Activated B cell treated with CpG ODN at 0.5 μM for 24 hours (primary cell): ENCODE measurements at regions of chr4 and their contacts with region 1.

Region 1: GRCh38 chr4:128060699-128061565 is at the start of gene LARP1B:
- DNase-seq: peak; percentile 95
- ATAC-seq: peak; percentile 89
- H3K4me3 Mint-ChIP-seq: peak within 1 kb of the TSS; percentile 84
- H3K27ac Mint-ChIP-seq: peak within 1 kb of the TSS; percentile 90
- H3K4me1 Mint-ChIP-seq: peaks cover 10% of the 10 kb centered on the region
- H3K27me3 Mint-ChIP-seq: no peaks in the 10 kb centered on the region
- CTCF ChIP-seq: no peak
- total RNA-seq, gene LARP1B: 10.7 and 11.5 TPM in 2 replicates

Region 2: DNA sequence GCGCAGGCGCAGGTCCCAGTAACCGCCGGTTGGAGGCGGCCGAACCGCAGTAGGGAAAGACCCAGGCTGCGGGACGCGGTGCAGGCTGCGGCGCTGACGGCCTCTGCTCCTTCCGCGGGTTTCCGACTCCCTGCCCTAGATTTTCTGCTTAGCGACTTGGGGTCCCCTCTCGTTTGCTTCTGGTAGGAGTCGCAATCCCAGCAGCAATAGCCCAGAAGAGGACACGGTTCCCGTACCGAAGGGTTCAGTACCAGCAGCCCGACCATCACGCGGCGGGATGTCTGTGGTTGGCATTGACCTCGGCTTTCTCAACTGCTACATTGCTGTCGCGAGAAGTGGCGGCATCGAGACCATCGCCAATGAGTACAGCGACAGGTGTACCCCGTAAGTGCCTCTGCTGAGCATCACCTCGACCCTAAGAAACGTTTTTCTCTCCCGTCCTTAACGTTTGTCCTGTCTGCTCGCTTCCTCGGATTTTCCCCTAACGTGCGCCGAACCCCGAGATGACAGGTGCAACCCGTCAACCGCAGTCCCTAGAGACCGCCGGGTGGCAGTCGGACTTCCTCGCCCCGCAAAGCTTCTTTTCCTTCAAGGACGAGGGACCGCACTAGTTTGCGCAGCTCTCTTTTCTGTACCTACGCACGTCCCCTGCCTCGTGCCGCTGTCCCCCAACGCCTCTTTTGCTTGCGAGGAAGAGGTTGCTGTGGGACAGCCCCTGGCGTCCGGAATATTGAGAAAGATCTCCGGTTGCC is 278.5 kb before region 1 on chr4 and contains the start of gene HSPA4L:
- CTCF ChIA-PET with region 1: no interaction called
- POLR2A ChIA-PET with region 1: no interaction called
- intact Hi-C with region 1: loop called (anchors 5 kb)
- DNase-seq: peak; percentile 44
- ATAC-seq: peak; percentile 84
- H3K4me3 Mint-ChIP-seq: peak within 1 kb of the TSS; percentile 88
- H3K27ac Mint-ChIP-seq: peak within 1 kb of the TSS; percentile 38
- H3K4me1 Mint-ChIP-seq: peaks cover 19% of the 10 kb centered on the region
- H3K27me3 Mint-ChIP-seq: peaks cover 48% of the 10 kb centered on the region
- CTCF ChIP-seq: no peak
- total RNA-seq, gene HSPA4L: 0.07 and 0.13 TPM in 2 replicates

Region 3: GRCh38 chr4:127965062-127965802 is 95.7 kb before region 1 on chr4 and contains the starts of genes ABHD18 and MFSD8:
- CTCF ChIA-PET with region 1: interaction called, 9 read pairs
- POLR2A ChIA-PET with region 1: interaction called, 69 read pairs
- intact Hi-C with region 1: loop called (anchors 1 kb)
- DNase-seq: peak; percentile 96
- ATAC-seq: peak; percentile 96
- H3K4me3 Mint-ChIP-seq: peak within 1 kb of the TSS; percentile 98
- H3K27ac Mint-ChIP-seq: peak within 1 kb of the TSS; percentile 96
- H3K4me1 Mint-ChIP-seq: peaks cover 34% of the 10 kb centered on the region
- H3K27me3 Mint-ChIP-seq: no peaks in the 10 kb centered on the region
- CTCF ChIP-seq: no peak
- total RNA-seq, gene ABHD18: 12.8 and 13.9 TPM in 2 replicates
- total RNA-seq, gene MFSD8: 30.8 and 31.1 TPM in 2 replicates

Region 4: DNA sequence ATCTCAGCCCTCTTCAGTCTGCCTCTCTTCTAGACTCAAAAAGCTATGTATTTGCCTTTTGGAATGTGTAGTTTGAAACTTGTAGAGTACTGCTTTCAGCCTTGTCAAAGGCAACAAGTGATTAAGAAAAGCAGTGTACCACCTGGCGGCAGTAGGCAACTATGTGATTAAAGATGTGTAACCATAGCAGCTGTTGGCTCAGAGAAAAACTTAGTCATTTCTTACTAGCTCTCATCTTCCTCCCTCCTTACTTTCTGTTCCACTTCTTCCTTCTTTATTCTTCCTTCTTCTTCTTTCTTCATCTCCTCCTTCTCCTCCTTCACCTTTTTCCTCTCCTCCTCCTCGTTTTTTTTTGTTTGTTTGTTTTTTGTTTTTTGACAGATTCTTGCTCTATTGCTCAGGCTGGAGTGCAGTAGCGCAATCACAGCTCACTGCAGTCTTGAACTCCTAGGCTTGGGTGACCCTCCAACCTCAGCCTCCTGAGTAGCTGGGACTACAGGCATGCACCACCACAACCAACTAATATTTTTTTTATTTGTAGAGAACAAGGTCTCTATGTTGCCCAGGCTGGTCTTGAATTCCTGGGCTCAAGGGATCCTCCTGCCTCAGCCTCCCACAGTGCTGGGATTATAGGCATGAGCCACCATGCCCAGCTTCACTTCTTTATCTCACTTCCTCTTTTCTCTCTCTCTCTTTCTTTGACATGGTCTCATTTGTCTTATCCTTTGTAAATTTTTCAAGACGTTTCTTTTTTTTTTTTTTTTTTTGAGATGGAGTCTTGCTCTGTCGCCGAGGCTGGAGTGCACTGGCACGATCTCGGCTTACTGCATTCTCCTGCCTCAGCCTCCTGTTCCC is 63.2 kb before region 1 on chr4:
- CTCF ChIA-PET with region 1: interaction called, 3 read pairs
- POLR2A ChIA-PET with region 1: interaction called, 9 read pairs
- intact Hi-C with region 1: loop called (anchors 1 kb)
- DNase-seq: no peak
- ATAC-seq: peak; percentile 92
- H3K4me3 Mint-ChIP-seq: peak overlapping the region; percentile 2
- H3K27ac Mint-ChIP-seq: peak overlapping the region; percentile 81
- H3K4me1 Mint-ChIP-seq: peaks cover 23% of the 10 kb centered on the region
- H3K27me3 Mint-ChIP-seq: no peaks in the 10 kb centered on the region
- CTCF ChIP-seq: no peak

Region 5: DNA sequence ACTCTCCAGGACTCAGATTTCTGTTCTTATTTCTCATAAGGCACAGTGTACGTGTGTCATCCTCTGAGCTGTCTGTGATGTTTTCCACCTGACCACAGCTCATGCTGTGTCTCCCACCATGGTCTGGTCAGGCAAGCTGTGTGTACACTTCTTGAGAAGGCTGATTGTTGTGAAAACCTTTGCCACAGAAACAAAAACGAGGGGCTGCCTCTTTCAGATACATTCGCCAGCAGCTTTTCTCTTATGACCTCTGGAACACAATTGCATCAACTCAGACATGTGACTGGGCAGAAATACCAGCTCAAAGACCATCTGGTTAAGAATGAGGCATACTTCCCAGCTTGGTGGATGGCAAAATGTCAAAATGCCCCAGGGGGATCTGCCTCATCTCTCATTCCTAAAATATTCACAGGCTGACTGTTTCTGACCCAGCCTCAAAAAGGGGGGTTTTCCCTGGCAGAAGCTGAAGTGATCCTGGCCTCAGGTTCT is 180.5 kb after region 1 on chr4:
- CTCF ChIA-PET with region 1: no interaction called
- POLR2A ChIA-PET with region 1: no interaction called
- intact Hi-C with region 1: no loop called
- DNase-seq: no peak
- ATAC-seq: no peak
- H3K4me3 Mint-ChIP-seq: no peak overlapping the region
- H3K27ac Mint-ChIP-seq: no peak overlapping the region
- H3K4me1 Mint-ChIP-seq: no peaks in the 10 kb centered on the region
- H3K27me3 Mint-ChIP-seq: no peaks in the 10 kb centered on the region
- CTCF ChIP-seq: no peak

Region 6: DNA sequence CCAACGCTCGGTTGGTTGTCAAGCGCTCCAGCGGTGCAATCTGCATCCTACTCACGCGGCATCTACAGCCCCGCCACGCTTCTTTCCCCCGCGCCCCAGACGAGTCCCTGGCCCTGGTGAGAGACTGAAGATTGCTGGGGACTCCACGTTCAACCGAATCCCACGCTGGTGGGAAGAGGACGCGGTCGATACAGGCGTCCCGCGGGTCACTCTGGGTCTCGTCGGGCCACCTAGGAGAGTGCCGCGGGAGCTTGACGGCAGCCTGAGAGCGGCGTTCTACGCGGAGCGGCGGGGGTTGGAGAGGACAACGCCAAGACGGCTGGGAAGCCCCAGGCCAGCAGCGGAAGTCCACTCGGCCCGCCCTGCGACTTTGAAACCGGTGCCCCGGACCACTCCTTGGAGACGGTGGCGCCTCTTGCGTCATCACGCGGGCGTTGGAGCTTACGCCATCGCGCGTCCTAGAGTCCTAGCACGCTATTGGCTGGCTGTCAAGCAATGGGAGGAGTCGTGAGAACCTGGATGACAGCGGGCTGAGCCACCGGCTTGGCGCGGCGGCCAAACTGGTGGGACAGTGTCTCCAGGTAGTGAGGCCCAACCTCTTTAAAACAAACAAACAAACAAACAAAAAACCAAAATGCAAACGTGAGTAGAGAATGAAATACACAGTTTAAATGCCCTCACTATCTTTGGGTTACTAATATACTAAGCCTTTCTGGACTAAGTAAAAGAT is 1032.4 kb after region 1 on chr4 and contains the start of gene SCLT1:
- CTCF ChIA-PET with region 1: no interaction called
- POLR2A ChIA-PET with region 1: interaction called, 11 read pairs
- intact Hi-C with region 1: loop called (anchors 2 kb)
- DNase-seq: peak; percentile 94
- ATAC-seq: peak; percentile 92
- H3K4me3 Mint-ChIP-seq: no peak within 1 kb of the TSS
- H3K27ac Mint-ChIP-seq: no peak within 1 kb of the TSS
- H3K4me1 Mint-ChIP-seq: peaks cover 45% of the 10 kb centered on the region
- H3K27me3 Mint-ChIP-seq: no peaks in the 10 kb centered on the region
- CTCF ChIP-seq: no peak
- total RNA-seq, gene SCLT1: 24.5 and 25.0 TPM in 2 replicates

Region 7: DNA sequence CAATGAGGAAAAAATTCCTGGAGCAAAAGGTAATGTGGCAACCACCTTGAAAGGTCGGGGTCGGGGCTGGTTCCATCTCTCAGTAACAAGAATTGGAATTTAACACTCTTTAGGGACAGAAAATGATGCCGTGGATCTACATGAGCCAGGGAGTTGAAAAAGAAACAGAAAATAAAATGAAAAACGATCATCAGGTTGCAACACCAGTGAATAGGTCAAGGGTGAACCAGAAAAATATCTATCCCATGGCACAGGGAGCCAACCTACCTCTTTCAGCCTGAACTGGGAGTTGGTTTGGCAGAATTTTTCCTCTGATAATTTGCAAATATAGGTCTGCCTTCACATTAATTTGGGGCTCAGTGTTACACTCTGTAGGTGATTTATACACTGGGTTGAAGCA is 1128.7 kb after region 1 on chr4:
- CTCF ChIA-PET with region 1: no interaction called
- POLR2A ChIA-PET with region 1: no interaction called
- intact Hi-C with region 1: no loop called
- DNase-seq: no peak
- ATAC-seq: no peak
- H3K4me3 Mint-ChIP-seq: no peak overlapping the region
- H3K27ac Mint-ChIP-seq: no peak overlapping the region
- H3K4me1 Mint-ChIP-seq: no peaks in the 10 kb centered on the region
- H3K27me3 Mint-ChIP-seq: peaks cover 3% of the 10 kb centered on the region
- CTCF ChIP-seq: no peak